ENCODE measurements at regions of chr2 and their contacts with region 1.

Region 1: DNA sequence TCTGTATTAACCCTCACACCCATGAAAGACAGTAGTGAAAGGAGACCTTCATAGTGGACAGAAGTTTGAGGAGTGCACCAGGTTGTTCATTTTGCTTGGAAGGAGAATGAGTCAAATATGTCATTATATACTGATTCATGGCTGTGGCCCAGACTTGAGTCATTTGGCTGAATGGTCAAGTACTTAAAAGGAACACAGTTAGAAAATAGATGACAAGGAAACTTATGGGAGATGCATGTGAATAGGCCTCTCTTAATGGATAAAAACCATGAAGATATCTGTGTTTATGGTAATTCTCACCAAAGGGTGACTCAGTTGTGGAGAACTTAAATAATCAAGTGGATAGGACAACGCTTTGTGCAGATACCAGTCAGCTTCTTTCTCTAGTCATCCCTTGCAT is 524.7 kb upstream of the CNTNAP5 start:
- DNase-seq: no peak
- ATAC-seq: no peak
- H3K4me3 ChIP-seq: no peak overlapping the region
- H3K4me3 Mint-ChIP-seq: no peak overlapping the region
- H3K27ac ChIP-seq: no peak overlapping the region
- H3K27ac Mint-ChIP-seq: no peak overlapping the region
- H3K4me1 ChIP-seq: no peaks in the 10 kb centered on the region
- H3K4me1 Mint-ChIP-seq: no peaks in the 10 kb centered on the region
- H3K27me3 ChIP-seq: no peaks in the 10 kb centered on the region
- H3K27me3 Mint-ChIP-seq: no peaks in the 10 kb centered on the region

Region 2: GRCh38 chr2:123463886-123464285 is 36.5 kb before region 1 on chr2:
- CTCF ChIA-PET with region 1: interaction called in 1 of 2 experiments, 20 read pairs
- POLR2A ChIA-PET with region 1: no interaction called
- DNase-seq: no peak
- ATAC-seq: no peak
- H3K4me3 ChIP-seq: no peak overlapping the region
- H3K4me3 Mint-ChIP-seq: no peak overlapping the region
- H3K27ac ChIP-seq: no peak overlapping the region
- H3K27ac Mint-ChIP-seq: no peak overlapping the region
- H3K4me1 ChIP-seq: no peaks in the 10 kb centered on the region
- H3K4me1 Mint-ChIP-seq: no peaks in the 10 kb centered on the region
- H3K27me3 ChIP-seq: no peaks in the 10 kb centered on the region
- H3K27me3 Mint-ChIP-seq: no peaks in the 10 kb centered on the region

Region 3: GRCh38 chr2:123481406-123481805 is 18.9 kb before region 1 on chr2:
- CTCF ChIA-PET with region 1: no interaction called
- POLR2A ChIA-PET with region 1: no interaction called
- DNase-seq: no peak
- ATAC-seq: no peak
- H3K4me3 ChIP-seq: no peak overlapping the region
- H3K4me3 Mint-ChIP-seq: no peak overlapping the region
- H3K27ac ChIP-seq: no peak overlapping the region
- H3K27ac Mint-ChIP-seq: no peak overlapping the region
- H3K4me1 ChIP-seq: no peaks in the 10 kb centered on the region
- H3K4me1 Mint-ChIP-seq: no peaks in the 10 kb centered on the region
- H3K27me3 ChIP-seq: no peaks in the 10 kb centered on the region
- H3K27me3 Mint-ChIP-seq: no peaks in the 10 kb centered on the region